ENCODE measurements at regions of chr7 and their contacts with region 1.

Region 1: DNA sequence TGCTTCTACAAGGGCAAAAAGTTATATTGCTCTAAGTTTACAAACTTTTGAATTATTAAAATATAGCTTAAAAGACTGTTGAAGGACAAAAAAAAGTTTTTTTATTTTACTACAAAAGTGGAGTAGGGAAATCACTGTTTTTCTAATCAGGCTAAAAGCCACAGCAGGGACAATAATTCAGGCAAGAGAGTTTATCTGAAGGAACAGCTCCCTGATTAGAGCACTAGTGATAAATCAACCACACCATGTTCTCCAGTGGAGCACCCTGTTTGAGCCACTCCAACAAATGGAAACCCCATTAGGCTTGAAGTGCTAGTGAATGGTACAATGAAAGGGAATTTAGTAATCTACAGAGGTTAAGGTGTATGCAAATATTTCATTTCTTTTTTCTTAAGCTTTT is 357.1 kb downstream of the SEMA3D start:
- DNase-seq: no peak
- ATAC-seq: no peak
- H3K4me3 ChIP-seq: no peak overlapping the region
- H3K27ac ChIP-seq: no peak overlapping the region
- H3K4me1 ChIP-seq: no peaks in the 10 kb centered on the region
- H3K27me3 ChIP-seq: no peaks in the 10 kb centered on the region
- CTCF ChIP-seq: no peak
- POLR2A ChIP-seq: no peak

Region 2: GRCh38 chr7:84042110-84042539 is 787.6 kb before region 1 on chr7:
- intact Hi-C with region 1: loop called in 1 of 10 experiments (anchors 5 kb)
- DNase-seq: no peak
- ATAC-seq: no peak
- H3K4me3 ChIP-seq: no peak overlapping the region
- H3K27ac ChIP-seq: no peak overlapping the region
- H3K4me1 ChIP-seq: no peaks in the 10 kb centered on the region
- H3K27me3 ChIP-seq: no peaks in the 10 kb centered on the region
- CTCF ChIP-seq: no peak
- POLR2A ChIP-seq: no peak

Region 3: GRCh38 chr7:84757761-84758160 is 72.0 kb before region 1 on chr7:
- intact Hi-C with region 1: no loop called
- DNase-seq: no peak
- ATAC-seq: no peak
- H3K4me3 ChIP-seq: no peak overlapping the region
- H3K27ac ChIP-seq: no peak overlapping the region
- H3K4me1 ChIP-seq: no peaks in the 10 kb centered on the region
- H3K27me3 ChIP-seq: no peaks in the 10 kb centered on the region
- CTCF ChIP-seq: no peak
- POLR2A ChIP-seq: no peak

Region 4: DNA sequence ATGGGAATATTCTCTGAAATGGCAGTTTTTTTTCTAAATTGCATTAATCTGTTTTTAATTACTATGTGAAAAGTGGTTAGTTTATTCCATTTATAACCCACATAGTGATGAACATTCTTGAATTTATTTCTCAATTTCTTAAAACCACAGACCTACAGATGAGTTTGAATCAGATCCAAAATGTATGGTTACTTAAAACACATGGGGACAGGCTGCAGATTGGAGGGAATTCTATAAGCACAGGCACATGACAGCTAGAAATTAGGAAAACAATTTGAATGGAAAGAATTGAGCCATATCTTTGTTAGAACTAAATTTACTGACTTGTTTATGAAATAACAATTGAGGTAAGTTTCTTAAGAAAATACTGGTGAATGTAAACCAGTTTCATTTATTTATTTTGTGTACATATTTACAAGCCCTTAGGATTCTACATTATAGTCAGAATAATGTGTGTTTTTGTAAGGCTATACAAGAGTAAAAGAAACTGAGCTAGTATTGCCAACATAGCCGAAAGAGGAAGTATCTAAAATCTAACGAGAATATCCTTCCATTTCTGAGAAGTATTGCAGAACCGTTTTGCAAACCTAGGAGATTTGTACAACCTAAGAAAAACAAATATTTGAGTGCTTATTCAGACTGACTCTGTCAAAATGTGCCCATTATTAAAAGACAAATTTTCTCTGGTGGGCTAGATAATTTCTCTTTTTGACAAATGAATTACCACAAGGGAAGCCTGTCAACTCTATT is 791.4 kb after region 1 on chr7:
- intact Hi-C with region 1: no loop called
- DNase-seq: no peak
- ATAC-seq: no peak
- H3K4me3 ChIP-seq: no peak overlapping the region
- H3K27ac ChIP-seq: peak overlapping the region in 1 of 12 donors; percentile 83
- H3K4me1 ChIP-seq: peaks cover 0 to 6% (median 0%) of the 10 kb centered on the region in 12 donors
- H3K27me3 ChIP-seq: no peaks in the 10 kb centered on the region
- CTCF ChIP-seq: no peak
- POLR2A ChIP-seq: no peak